H1 (cell line): ENCODE measurements at regions of chr6 and their contacts with region 1.

Region 1: DNA sequence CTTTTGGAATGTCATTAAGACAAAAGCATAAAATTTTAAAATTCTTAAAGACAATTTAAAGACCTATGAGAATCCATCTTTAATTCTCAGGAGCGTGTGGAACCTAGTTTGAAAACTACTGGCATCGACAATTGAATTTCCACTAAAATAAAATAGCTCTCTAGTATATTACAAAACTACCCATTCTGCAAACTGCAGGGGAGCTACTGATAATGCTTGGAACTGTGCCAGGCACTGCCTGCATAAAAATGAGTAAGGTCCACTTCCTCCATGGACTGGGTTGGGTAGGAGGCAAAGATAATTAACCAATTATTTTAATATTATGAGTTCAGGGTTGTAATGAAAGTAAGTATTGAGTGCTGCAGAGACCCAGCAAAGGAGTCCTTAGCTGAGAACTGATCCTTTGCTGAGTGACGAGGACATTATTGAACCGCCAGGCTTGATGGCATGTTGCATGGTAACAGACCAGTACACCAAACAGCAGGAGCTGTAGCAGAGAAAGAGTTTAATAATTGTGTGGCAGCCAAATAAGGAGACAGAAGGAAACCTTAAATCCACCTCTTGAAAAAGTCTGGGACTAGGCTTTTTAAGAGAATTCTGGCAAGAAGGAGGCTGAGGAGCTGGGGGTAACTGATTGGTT is 261.3 kb downstream of the ESR1 start:
- DNase-seq: no peak
- H3K4me3 ChIP-seq: no peak overlapping the region
- H3K27ac ChIP-seq: no peak overlapping the region
- H3K4me1 ChIP-seq: peaks cover 0 to 5% (median 1%) of the 10 kb centered on the region in 4 experiments; a peak in 2 of 7 replicates
- H3K27me3 ChIP-seq: no peaks in the 10 kb centered on the region
- CTCF ChIP-seq: no peak
- EP300 ChIP-seq: no peak
- POLR2A ChIP-seq: no peak
- RAD21 ChIP-seq: no peak

Region 2: GRCh38 chr6:152078804-152079203 is 10.1 kb after region 1 on chr6:
- CTCF ChIA-PET with region 1: interaction called, 19 read pairs
- POLR2A ChIA-PET with region 1: no interaction called
- DNase-seq: peak; percentile 27 to 54
- H3K4me3 ChIP-seq: no peak overlapping the region
- H3K27ac ChIP-seq: no peak overlapping the region
- H3K4me1 ChIP-seq: 0 out of 7 replicates have a peak, but pooled peaks cover 0 to 2% (median 0%) of the 10 kb centered on the region in 4 experiments
- H3K27me3 ChIP-seq: no peaks in the 10 kb centered on the region
- CTCF ChIP-seq: peak; percentile 32 to 64 (median 48)
- EP300 ChIP-seq: no peak
- POLR2A ChIP-seq: no peak
- RAD21 ChIP-seq: peak; percentile 48 to 53

Region 3: GRCh38 chr6:152329638-152330448 is 261.1 kb after region 1 on chr6:
- CTCF ChIA-PET with region 1: no interaction called
- POLR2A ChIA-PET with region 1: no interaction called
- DNase-seq: no peak
- H3K4me3 ChIP-seq: no peak overlapping the region
- H3K27ac ChIP-seq: no peak overlapping the region
- H3K4me1 ChIP-seq: no peaks in the 10 kb centered on the region
- H3K27me3 ChIP-seq: no peaks in the 10 kb centered on the region
- CTCF ChIP-seq: no peak
- EP300 ChIP-seq: no peak
- POLR2A ChIP-seq: no peak
- RAD21 ChIP-seq: no peak